ENCODE measurements at regions of chr14 and their contacts with region 1.

Region 1: DNA sequence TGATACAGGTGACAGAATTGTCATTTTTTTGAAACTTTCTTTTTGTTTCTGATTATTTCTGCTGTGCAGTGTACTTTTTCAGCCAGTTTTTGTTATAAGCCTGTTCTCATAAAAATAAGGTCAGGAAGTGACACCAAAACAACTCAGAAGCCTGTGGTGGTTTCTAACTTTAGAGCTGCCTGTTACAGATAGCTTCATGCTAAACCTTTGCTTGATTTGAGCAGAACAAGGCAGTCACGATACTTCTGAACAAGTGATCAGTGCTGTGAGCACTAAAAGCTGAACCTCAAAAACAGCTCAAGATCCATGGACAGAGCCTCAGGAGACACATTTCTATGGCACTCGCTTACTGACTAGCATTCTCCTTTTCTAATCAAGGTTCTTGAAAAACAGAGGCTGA is 82.0 kb downstream of the PRKCH start:
- DNase-seq: peak; percentile 55
- ATAC-seq: peak; percentile 79
- H3K4me3 Mint-ChIP-seq: peak overlapping the region; percentile 56
- H3K27ac Mint-ChIP-seq: peak overlapping the region; percentile 94
- H3K4me1 Mint-ChIP-seq: peaks cover 82% of the 10 kb centered on the region
- H3K27me3 Mint-ChIP-seq: no peaks in the 10 kb centered on the region

Region 2: GRCh38 chr14:61296719-61297502 is 106.5 kb before region 1 on chr14:
- CTCF ChIA-PET with region 1: no interaction called
- DNase-seq: no peak
- ATAC-seq: peak; percentile 67
- H3K4me3 Mint-ChIP-seq: peak overlapping the region; percentile 27
- H3K27ac Mint-ChIP-seq: no peak overlapping the region
- H3K4me1 Mint-ChIP-seq: peaks cover 42% of the 10 kb centered on the region
- H3K27me3 Mint-ChIP-seq: no peaks in the 10 kb centered on the region

Region 3: GRCh38 chr14:61351477-61351876 is 51.9 kb before region 1 on chr14:
- CTCF ChIA-PET with region 1: no interaction called
- DNase-seq: no peak
- ATAC-seq: no peak
- H3K4me3 Mint-ChIP-seq: peak overlapping the region; percentile 52
- H3K27ac Mint-ChIP-seq: peak overlapping the region; percentile 90
- H3K4me1 Mint-ChIP-seq: peaks cover 92% of the 10 kb centered on the region
- H3K27me3 Mint-ChIP-seq: no peaks in the 10 kb centered on the region

Region 4: DNA sequence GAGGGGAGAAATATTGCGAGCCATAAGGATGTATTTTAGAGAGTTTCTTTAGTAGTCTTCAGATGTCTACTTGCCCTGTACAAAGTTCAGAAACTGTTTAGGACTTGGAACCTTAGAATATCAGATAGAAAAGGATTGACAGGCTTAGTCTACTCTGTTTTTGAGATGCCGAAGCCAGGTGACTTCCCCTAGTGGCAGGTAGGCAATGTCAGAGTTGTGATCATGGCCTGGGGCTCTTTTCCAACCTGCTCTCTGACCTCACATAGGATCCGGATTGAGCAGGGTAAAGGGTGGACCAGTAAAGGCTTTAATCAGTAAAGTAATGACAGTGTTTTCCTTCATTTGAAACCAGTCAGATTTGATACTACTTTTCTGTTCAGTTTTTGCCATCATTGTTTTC is 22.4 kb before region 1 on chr14:
- CTCF ChIA-PET with region 1: interaction called, 10 read pairs
- DNase-seq: no peak
- ATAC-seq: no peak
- H3K4me3 Mint-ChIP-seq: peak overlapping the region; percentile 27
- H3K27ac Mint-ChIP-seq: peak overlapping the region; percentile 65
- H3K4me1 Mint-ChIP-seq: peaks cover 14% of the 10 kb centered on the region
- H3K27me3 Mint-ChIP-seq: no peaks in the 10 kb centered on the region

Measured in activated CD8-positive, alpha-beta memory T cell treated with anti-CD3 and anti-CD28 coated beads, Interleukin-2, amount 10 ng/mL, durations not matched to agents 7 days and 5 days (primary cell).